Mammary epithelial cell (primary cell): ENCODE measurements at regions of chr19 and their contacts with region 1.

Region 1: GRCh38 chr19:31054430-31054829 is 294.8 kb downstream of the TSHZ3 start:
- DNase-seq: peak; percentile 43
- H3K4me3 ChIP-seq: no peak overlapping the region
- H3K27ac ChIP-seq: no peak overlapping the region
- H3K4me1 ChIP-seq: no peaks in the 10 kb centered on the region
- H3K27me3 ChIP-seq: no peaks in the 10 kb centered on the region
- CTCF ChIP-seq: peak; percentile 75 to 86

Region 2: GRCh38 chr19:30529876-30530275 is 524.6 kb before region 1 on chr19:
- CTCF ChIA-PET with region 1: no interaction called
- dilution Hi-C with region 1: no loop called
- in situ Hi-C with region 1: no loop called
- intact Hi-C with region 1: no loop called
- DNase-seq: no peak
- H3K4me3 ChIP-seq: no peak overlapping the region
- H3K27ac ChIP-seq: no peak overlapping the region
- H3K4me1 ChIP-seq: no peaks in the 10 kb centered on the region
- H3K27me3 ChIP-seq: no peaks in the 10 kb centered on the region
- CTCF ChIP-seq: no peak

Region 3: GRCh38 chr19:31037286-31037980 is 17.0 kb before region 1 on chr19:
- CTCF ChIA-PET with region 1: no interaction called
- dilution Hi-C with region 1: no loop called
- in situ Hi-C with region 1: no loop called
- intact Hi-C with region 1: no loop called
- DNase-seq: no peak
- H3K4me3 ChIP-seq: no peak overlapping the region
- H3K27ac ChIP-seq: no peak overlapping the region
- H3K4me1 ChIP-seq: no peaks in the 10 kb centered on the region
- H3K27me3 ChIP-seq: no peaks in the 10 kb centered on the region
- CTCF ChIP-seq: no peak

Region 4: GRCh38 chr19:31064491-31064890 is 10.1 kb after region 1 on chr19:
- CTCF ChIA-PET with region 1: interaction called, 25 read pairs
- dilution Hi-C with region 1: no loop called
- in situ Hi-C with region 1: no loop called
- intact Hi-C with region 1: no loop called
- DNase-seq: peak; percentile 33
- H3K4me3 ChIP-seq: no peak overlapping the region
- H3K27ac ChIP-seq: no peak overlapping the region
- H3K4me1 ChIP-seq: peaks cover 12% of the 10 kb centered on the region
- H3K27me3 ChIP-seq: no peaks in the 10 kb centered on the region
- CTCF ChIP-seq: no peak

Region 5: DNA sequence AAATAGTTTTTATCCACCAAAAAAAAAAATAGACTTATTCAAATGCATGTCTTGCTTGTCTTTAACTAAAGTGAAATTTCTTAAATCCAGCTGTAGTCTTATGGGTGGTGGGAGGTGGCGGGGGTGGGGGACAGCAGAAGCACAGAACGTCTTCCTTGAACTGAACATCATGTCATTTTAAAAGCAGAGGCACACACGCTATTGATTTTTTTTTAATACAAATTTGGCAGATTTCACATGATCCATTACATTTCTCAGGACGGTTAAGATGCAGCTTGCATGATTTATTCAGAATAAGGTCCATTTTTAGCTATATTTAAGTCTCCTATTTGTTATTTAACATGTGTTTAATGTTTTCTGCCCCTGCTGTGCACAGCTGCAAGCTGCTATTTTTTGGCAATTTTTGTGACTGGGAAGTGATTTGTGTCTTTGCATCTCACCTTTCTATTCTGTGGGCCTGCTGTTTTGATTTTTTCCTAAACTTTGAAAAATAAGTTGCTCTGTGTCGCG is 20.8 kb after region 1 on chr19:
- CTCF ChIA-PET with region 1: no interaction called
- dilution Hi-C with region 1: no loop called
- in situ Hi-C with region 1: no loop called
- intact Hi-C with region 1: no loop called
- DNase-seq: no peak
- H3K4me3 ChIP-seq: no peak overlapping the region
- H3K27ac ChIP-seq: no peak overlapping the region
- H3K4me1 ChIP-seq: no peaks in the 10 kb centered on the region
- H3K27me3 ChIP-seq: no peaks in the 10 kb centered on the region
- CTCF ChIP-seq: no peak

Region 6: GRCh38 chr19:31119951-31120690 is 65.7 kb after region 1 on chr19:
- CTCF ChIA-PET with region 1: no interaction called
- dilution Hi-C with region 1: loop called (anchors 5 kb)
- in situ Hi-C with region 1: no loop called
- intact Hi-C with region 1: no loop called
- DNase-seq: no peak
- H3K4me3 ChIP-seq: no peak overlapping the region
- H3K27ac ChIP-seq: no peak overlapping the region
- H3K4me1 ChIP-seq: no peaks in the 10 kb centered on the region
- H3K27me3 ChIP-seq: no peaks in the 10 kb centered on the region
- CTCF ChIP-seq: no peak

Region 7: GRCh38 chr19:31154021-31154420 is 99.6 kb after region 1 on chr19:
- CTCF ChIA-PET with region 1: no interaction called
- dilution Hi-C with region 1: no loop called
- in situ Hi-C with region 1: no loop called
- intact Hi-C with region 1: no loop called
- DNase-seq: peak; percentile 95
- H3K4me3 ChIP-seq: no peak overlapping the region
- H3K27ac ChIP-seq: peak overlapping the region; percentile 77
- H3K4me1 ChIP-seq: peaks cover 17% of the 10 kb centered on the region
- H3K27me3 ChIP-seq: no peaks in the 10 kb centered on the region
- CTCF ChIP-seq: peak in 1 of 2 donors; percentile 11

Region 8: DNA sequence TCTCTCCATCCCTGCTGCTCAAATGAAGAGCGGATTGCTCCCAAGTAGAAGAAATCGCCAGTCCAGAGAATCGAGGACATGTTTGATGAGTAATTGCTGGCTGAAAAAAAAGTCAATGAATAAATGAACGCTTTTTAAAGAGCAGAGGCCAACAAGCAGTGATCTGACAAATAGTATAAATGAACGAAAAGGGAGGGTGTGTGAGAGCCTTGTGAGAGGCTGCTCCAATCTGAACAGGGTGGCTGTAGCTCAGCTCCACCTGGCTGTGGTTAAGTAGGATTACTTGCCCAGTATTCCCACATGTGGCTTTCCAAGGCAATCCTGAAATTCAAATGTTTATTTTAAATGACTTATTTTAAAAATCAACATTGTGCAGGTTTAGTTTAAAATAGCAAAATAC is 177.8 kb after region 1 on chr19:
- CTCF ChIA-PET with region 1: no interaction called
- dilution Hi-C with region 1: no loop called
- in situ Hi-C with region 1: no loop called
- intact Hi-C with region 1: loop called (anchors 1 kb)
- DNase-seq: no peak
- H3K4me3 ChIP-seq: no peak overlapping the region
- H3K27ac ChIP-seq: no peak overlapping the region
- H3K4me1 ChIP-seq: no peaks in the 10 kb centered on the region
- H3K27me3 ChIP-seq: no peaks in the 10 kb centered on the region
- CTCF ChIP-seq: peak in 1 of 2 donors; percentile 34

Region 9: GRCh38 chr19:31548941-31549340 is 494.5 kb after region 1 on chr19:
- CTCF ChIA-PET with region 1: no interaction called
- dilution Hi-C with region 1: no loop called
- in situ Hi-C with region 1: no loop called
- intact Hi-C with region 1: loop called (anchors 1 kb)
- DNase-seq: peak; percentile 6
- H3K4me3 ChIP-seq: no peak overlapping the region
- H3K27ac ChIP-seq: no peak overlapping the region
- H3K4me1 ChIP-seq: no peaks in the 10 kb centered on the region
- H3K27me3 ChIP-seq: no peaks in the 10 kb centered on the region
- CTCF ChIP-seq: peak; percentile 12 to 73